ENCODE measurements at regions of chr11 and their contacts with region 1.

Region 1: GRCh38 chr11:34313099-34313517 is 44.7 kb downstream of the ABTB2 start:
- DNase-seq: peak in 4 of 5 donors; percentile 30 to 67 (median 54)
- ATAC-seq: peak in 3 of 4 donors; percentile 32 to 55 (median 46)
- H3K4me3 ChIP-seq: no peak overlapping the region
- H3K27ac ChIP-seq: peak overlapping the region in 6 of 12 donors; percentile 2 to 70 (median 32)
- H3K4me1 ChIP-seq: peaks cover 0 to 79% (median 32%) of the 10 kb centered on the region in 12 donors
- H3K27me3 ChIP-seq: no peaks in the 10 kb centered on the region
- CTCF ChIP-seq: no peak
- POLR2A ChIP-seq: no peak

Region 2: GRCh38 chr11:34274723-34275401 is 38.2 kb before region 1 on chr11:
- intact Hi-C with region 1: loop called in 1 of 10 experiments (anchors 5 kb)
- DNase-seq: peak; percentile 80 to 92 (median 82)
- ATAC-seq: peak; percentile 82 to 94 (median 90)
- H3K4me3 ChIP-seq: no peak overlapping the region
- H3K27ac ChIP-seq: peak overlapping the region in 9 of 12 donors; percentile 19 to 70 (median 57)
- H3K4me1 ChIP-seq: peaks cover 0 to 29% (median 9%) of the 10 kb centered on the region in 12 donors
- H3K27me3 ChIP-seq: no peaks in the 10 kb centered on the region
- CTCF ChIP-seq: no peak
- POLR2A ChIP-seq: no peak

Region 3: GRCh38 chr11:34405079-34405858 is 92.2 kb after region 1 on chr11:
- intact Hi-C with region 1: no loop called
- DNase-seq: no peak
- ATAC-seq: no peak
- H3K4me3 ChIP-seq: peak overlapping the region in 2 of 12 donors; percentile 16 to 23
- H3K27ac ChIP-seq: no peak overlapping the region
- H3K4me1 ChIP-seq: peaks cover 0 to 5% (median 0%) of the 10 kb centered on the region in 12 donors
- H3K27me3 ChIP-seq: peaks cover 0 to 10% (median 0%) of the 10 kb centered on the region in 9 donors
- CTCF ChIP-seq: no peak
- POLR2A ChIP-seq: no peak